K562 (cell line): ENCODE measurements at regions of chr2 and their contacts with region 1.

Region 1: DNA sequence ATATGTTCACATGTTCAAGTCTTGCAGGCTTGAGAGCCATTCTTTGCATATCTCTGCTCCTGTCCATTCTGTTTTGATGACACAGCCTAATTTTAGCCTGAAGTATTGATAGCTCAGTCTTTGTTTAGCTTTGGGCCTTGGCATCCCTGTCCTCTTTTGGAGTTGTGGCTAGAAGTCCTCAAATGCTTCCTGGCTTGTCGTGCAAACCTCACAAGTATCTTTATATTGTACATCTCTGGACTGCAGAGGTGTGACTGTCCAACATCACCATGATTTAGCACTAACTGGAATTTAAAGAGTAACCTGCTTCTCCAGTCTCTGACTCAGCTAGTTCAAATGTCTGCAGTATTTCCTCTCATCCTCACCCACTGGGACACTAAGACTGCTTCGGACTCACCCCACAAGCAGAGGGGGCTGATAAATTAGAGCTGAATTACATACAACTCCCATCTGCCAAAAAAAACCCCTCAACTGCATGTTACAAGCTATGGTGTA is 11.7 kb downstream of the PFN4 start:
- DNase-seq: peak in 2 of 4 experiments; percentile 31 to 38
- ATAC-seq: peak; percentile 74
- H3K4me3 ChIP-seq: no peak overlapping the region
- H3K27ac ChIP-seq: peak overlapping the region; percentile 54; the same call in 2 of the 3 replicates
- H3K4me1 ChIP-seq: peaks cover 4 to 14% of the 10 kb centered on the region in 2 experiments; a peak in 3 of 5 replicates
- H3K27me3 ChIP-seq: no peaks in the 10 kb centered on the region
- CTCF ChIP-seq: no peak
- EP300 ChIP-seq: peak; percentile 22; the same call in 1 of the 2 replicates
- POLR2A ChIP-seq: no peak
- RAD21 ChIP-seq: no peak

Region 2: GRCh38 chr2:24123195-24123921 is 11.9 kb after region 1 on chr2 and contains the starts of genes FAM228B and PFN4:
- CTCF ChIA-PET with region 1: no interaction called
- POLR2A ChIA-PET with region 1: interaction called, 25 read pairs
- in situ Hi-C with region 1: no loop called
- intact Hi-C with region 1: no loop called
- DNase-seq: peak; percentile 89 to 95 (median 90)
- ATAC-seq: peak; percentile 98
- H3K4me3 ChIP-seq: peak within 1 kb of the TSS; percentile 67
- H3K27ac ChIP-seq: peak within 1 kb of the TSS; percentile 78
- H3K4me1 ChIP-seq: peaks cover 3 to 11% of the 10 kb centered on the region in 2 experiments; a peak in 3 of 5 replicates
- H3K27me3 ChIP-seq: no peaks in the 10 kb centered on the region
- CTCF ChIP-seq: no peak
- EP300 ChIP-seq: no peak
- POLR2A ChIP-seq: peak; percentile 86
- RAD21 ChIP-seq: no peak; a peak in 1 of 4 replicates
- polyA plus RNA-seq, gene FAM228B: 1.1 to 1.3 TPM
- polyA plus RNA-seq, gene PFN4: 0.07 to 0.15 TPM

Region 3: DNA sequence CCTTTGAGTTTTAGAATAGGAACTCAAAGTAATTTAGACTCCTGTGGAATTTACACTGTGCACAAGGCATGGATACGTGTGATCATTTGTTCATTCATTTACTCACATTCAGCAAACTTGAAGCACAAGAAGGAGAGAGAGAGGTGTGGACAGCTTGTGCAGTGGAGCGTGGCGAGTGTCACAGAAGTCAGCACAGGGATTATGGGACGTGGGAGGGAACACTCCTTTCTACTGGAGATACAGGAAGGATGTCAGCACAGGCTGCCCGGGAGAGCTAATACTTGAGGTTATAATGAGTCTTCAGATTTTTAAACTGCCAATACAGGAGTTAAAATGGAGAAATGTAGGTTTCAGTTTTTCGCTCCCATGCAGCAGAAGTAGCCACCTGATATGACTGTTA is 70.4 kb after region 1 on chr2:
- CTCF ChIA-PET with region 1: no interaction called
- POLR2A ChIA-PET with region 1: no interaction called
- in situ Hi-C with region 1: no loop called
- intact Hi-C with region 1: no loop called
- DNase-seq: peak in 2 of 4 experiments; percentile 29 to 50
- ATAC-seq: peak; percentile 82
- H3K4me3 ChIP-seq: no peak overlapping the region
- H3K27ac ChIP-seq: no peak overlapping the region
- H3K4me1 ChIP-seq: peaks cover 0 to 11% of the 10 kb centered on the region in 2 experiments; a peak in 3 of 5 replicates
- H3K27me3 ChIP-seq: 0 out of 5 replicates have a peak, but pooled peaks cover 0 to 3% of the 10 kb centered on the region in 2 experiments
- CTCF ChIP-seq: no peak
- EP300 ChIP-seq: no peak
- POLR2A ChIP-seq: no peak
- RAD21 ChIP-seq: no peak